Right ventricle myocardium inferior (tissue), 1 donor: ENCODE measurements at regions of chr2 and their contacts with region 1.

Region 1: GRCh38 chr2:71798266-71799012 is 345.1 kb downstream of the DYSF start:
- DNase-seq: no peak
- ATAC-seq: peak; percentile 24

Region 2: GRCh38 chr2:71545572-71546274 is 252.7 kb before region 1 on chr2:
- intact Hi-C with region 1: loop called (anchors 5 kb)
- DNase-seq: no peak
- ATAC-seq: peak; percentile 67

Region 3: DNA sequence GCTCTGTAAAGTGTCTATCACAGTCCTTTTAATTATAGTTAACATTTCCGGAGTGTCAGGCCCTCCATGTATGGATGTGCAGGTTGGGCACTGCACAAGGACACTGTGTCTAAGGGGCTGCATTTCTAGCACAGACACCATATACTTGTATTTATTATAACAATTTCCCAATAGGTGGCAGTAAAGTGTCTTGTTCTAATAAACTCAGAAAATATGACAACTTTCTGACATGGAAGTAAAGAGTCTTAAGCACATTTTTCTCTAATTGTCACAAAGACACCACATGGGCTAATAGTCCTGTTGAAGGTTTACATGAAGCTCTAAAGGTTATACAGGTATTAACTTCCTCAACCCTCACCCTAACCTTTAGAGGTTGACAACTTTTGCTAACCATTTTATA is 188.5 kb before region 1 on chr2:
- intact Hi-C with region 1: loop called (anchors 2 kb)
- DNase-seq: no peak
- ATAC-seq: no peak

Region 4: DNA sequence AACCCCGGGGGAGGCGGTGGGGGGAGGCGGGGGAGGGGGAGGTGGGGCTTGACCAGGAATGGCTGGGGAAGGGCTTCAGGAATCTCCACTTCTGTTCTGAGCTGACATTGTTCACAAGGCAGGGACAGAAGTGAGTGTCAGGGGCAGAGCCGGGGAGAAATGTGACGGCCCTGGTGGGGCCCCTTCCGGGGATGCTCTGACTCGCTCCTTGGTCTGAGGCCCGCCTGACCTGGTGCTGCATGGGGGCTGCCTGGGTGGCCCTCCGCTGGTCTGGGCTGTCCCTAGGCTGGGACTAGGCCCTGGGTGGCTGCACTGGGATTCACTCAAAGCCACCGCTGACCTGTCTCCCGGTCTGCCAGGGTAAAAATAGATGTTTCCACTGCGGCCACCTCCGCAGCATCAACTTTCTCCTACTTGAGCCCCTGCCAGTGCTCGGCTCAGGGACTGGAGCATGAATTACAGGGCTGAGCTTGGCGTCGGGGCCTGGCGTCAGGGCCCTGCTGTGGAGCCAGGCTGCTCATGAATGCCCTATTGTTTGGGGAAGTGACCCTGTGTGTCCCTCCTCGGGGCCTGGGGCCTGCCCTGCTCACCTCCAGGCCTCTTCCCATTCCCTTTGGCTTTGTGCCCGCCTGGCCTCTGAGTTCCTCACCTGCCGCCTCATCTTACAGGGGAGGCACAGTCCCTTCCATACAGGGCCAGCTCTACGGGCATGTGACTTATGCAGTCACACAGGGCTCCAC is 97.6 kb before region 1 on chr2:
- intact Hi-C with region 1: loop called (anchors 5 kb)
- DNase-seq: peak; percentile 89
- ATAC-seq: peak; percentile 90

Region 5: DNA sequence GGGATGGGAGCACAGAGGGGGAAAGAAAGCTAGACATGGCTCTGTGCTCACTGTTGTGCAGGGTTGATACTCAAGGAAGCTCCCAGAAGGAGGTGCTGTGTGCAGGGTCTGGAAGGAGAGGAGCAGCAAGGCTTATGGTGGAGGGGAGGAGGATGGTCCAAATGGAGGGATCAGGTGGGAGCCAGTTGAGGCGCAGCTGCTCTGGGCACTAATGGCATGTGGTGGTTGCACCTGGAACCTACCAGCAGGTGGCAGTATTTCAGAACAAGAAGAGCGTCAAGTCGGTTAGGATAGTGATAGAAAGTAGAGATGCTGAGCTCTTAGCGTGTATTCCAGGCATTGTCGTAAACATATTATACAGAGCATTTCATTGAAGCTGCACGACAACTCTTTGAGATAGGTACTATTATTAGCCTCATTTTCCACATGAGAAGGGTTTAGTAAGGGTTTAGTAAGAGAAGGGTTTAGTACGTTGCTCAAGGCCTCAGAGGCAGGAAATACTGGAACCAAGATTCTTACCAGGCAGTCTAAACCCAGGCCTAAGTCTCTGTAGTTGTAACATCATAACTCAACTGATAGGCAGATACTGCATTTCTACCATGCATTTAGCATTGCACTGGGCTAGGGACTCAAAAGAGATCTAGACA is 125.6 kb after region 1 on chr2:
- intact Hi-C with region 1: loop called (anchors 5 kb)
- DNase-seq: peak; percentile 75
- ATAC-seq: peak; percentile 74

Region 6: DNA sequence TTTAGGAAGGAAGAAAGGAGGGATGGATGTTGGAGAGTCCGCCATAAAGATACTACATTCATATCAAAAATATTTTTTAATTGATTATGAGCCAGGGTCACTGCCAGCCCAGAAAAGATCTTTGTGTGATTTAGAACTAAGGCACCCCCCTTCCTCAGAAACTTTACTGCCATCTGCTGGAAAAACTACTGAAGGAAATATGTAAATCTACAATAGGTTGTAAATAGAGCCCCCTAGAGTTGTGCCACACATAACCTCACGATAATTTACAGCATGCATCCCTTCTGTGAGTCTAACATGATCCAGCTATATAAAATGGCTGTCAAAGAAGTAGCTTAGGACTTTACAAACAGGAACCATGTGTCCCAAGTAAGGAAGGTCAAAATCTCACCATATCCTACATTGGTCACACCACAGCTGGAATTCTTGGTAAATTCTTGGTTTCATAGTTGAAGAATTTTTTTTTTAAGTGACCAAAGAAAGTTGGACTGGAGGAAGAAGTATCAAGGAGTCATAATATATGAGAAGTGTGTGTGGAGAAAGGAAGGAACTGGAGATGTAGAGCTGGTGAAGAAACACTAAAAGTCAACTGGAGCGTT is 196.7 kb after region 1 on chr2:
- intact Hi-C with region 1: loop called (anchors 5 kb)
- DNase-seq: no peak
- ATAC-seq: no peak

Region 7: DNA sequence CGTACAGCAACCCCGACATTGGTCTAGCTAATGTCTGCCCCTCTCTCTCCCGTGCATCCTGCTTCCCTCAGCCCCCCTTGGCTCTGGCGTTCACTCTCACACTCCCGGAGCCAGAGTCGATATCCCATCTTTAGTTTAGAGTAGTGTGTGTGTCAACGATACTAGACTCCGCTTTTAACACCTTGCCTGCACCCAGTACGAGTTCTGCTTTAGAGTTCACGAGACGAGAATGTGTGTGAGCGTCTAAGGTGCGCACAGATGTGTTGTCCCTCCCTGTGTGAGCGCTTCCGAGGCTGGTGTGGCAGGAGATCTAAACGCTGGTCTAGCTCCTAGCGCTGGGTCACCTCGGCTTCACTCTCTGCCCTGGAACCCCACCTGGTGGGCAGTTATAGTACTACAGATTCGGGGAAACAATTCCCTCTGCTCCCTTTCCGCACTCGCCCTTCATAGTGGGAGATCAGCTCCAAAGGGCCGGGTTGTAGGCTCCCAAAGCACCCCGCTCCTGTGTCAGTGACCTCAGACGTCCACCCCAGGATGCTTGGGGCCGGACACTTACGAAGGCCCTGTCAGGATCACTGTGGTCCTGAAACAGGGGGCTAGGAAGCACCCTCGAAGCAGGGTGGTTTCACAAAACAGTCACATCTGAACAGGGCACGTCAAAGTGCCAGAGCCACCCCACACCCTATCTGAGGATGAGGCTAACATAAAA is 351.9 kb after region 1 on chr2:
- intact Hi-C with region 1: loop called (anchors 1 kb)
- DNase-seq: peak; percentile 70
- ATAC-seq: peak; percentile 78